ENCODE measurements at regions of chr6 and their contacts with region 1.

Region 1: DNA sequence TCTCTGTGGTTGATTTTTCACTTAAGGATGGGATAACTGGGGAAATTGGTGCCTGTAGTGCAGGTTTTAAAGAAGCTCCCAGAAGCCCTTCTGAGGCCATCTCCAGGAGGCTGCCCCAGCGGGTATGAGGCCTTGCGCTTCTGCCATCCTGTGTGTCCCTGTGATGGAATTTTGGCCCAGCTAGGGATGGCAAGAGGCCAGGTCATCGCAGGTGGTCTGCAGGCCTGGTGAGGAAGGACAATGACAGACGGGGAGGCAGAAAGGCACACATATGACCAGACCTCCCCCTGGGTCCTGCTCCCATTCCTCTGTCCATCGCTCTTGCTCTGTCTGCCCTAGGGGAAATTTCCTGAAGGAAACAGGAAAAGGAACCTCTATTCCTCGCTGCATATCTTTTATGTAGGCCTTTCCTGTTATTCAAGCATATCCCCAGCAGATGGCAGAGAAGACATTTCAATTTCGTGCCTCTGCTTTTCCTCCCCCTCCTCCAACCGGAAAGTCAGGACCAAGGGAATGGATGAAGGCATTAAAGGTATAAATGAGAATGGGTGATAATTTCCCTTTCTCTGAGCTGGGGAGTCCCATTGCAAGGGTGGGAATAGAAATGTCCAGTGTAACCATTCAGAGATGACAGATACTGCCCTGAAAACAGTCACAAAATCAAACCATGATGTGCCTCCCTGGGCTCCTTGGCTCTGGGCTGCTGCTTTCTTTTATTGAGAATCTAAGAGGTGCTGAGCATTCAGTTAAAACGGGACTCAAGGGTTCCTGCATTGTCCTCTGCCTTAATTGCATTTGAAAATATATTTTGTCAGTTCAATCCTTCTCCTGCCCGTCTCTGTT is 17.6 kb upstream of the HLA-F start:
- DNase-seq: peak; percentile 63
- H3K4me3 ChIP-seq: no peak overlapping the region
- H3K27ac ChIP-seq: no peak overlapping the region
- H3K4me1 ChIP-seq: no peaks in the 10 kb centered on the region
- H3K27me3 ChIP-seq: peaks cover 24% of the 10 kb centered on the region
- CTCF ChIP-seq: peak; percentile 61

Region 2: GRCh38 chr6:29752451-29753308 is 47.1 kb after region 1 on chr6:
- CTCF ChIA-PET with region 1: no interaction called
- POLR2A ChIA-PET with region 1: no interaction called
- intact Hi-C with region 1: loop called (anchors 5 kb)
- DNase-seq: peak; percentile 93
- H3K4me3 ChIP-seq: peak overlapping the region; percentile 61
- H3K27ac ChIP-seq: no peak overlapping the region
- H3K4me1 ChIP-seq: peaks cover 14% of the 10 kb centered on the region
- H3K27me3 ChIP-seq: peaks cover 8% of the 10 kb centered on the region
- CTCF ChIP-seq: peak; percentile 99

Region 3: DNA sequence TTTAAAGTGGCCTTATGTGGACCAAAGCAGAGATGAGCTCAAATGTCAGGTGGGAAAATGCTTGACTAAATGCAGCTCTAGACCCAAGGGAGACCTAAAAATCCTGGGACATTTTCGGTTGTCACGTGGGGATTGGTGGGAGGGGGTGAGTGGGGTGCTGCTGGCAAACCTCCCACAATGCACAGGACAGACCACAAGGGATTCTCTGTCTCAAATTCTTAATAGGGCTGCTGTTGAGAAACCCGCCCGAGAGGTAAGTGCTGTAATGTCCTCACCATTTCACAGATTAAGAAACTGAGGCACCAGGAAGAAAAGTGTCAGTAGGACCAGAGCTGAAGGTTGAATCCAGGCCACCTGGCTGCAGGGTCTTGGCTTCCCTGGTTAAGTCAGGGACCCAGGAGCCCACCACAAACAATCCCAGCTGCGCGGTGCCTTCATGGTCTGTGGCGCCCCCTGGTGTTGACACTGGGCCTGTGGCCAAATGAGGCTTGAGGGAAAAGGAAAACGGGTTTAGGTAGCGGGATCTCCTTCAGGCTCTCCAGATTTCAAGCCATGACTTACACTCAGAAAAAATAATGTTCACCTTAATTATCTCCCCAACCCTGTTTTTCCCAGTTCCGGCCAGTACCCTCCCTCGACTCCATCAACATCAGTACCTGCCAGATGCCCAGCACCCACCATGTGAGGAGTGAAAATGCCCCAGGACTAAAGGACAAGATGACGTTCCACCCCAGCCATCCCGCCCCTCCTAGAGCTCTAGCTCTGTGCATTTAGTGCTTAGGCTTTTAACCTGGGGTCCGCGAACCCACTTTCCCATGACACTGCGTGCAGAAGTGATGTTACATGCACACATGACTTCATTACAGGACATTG is 129.2 kb after region 1 on chr6:
- CTCF ChIA-PET with region 1: interaction called, 3 read pairs
- POLR2A ChIA-PET with region 1: no interaction called
- intact Hi-C with region 1: loop called (anchors 2 kb)
- DNase-seq: peak; percentile 33
- H3K4me3 ChIP-seq: no peak overlapping the region
- H3K27ac ChIP-seq: no peak overlapping the region
- H3K4me1 ChIP-seq: no peaks in the 10 kb centered on the region
- H3K27me3 ChIP-seq: peaks cover 35% of the 10 kb centered on the region
- CTCF ChIP-seq: peak; percentile 89

Region 4: DNA sequence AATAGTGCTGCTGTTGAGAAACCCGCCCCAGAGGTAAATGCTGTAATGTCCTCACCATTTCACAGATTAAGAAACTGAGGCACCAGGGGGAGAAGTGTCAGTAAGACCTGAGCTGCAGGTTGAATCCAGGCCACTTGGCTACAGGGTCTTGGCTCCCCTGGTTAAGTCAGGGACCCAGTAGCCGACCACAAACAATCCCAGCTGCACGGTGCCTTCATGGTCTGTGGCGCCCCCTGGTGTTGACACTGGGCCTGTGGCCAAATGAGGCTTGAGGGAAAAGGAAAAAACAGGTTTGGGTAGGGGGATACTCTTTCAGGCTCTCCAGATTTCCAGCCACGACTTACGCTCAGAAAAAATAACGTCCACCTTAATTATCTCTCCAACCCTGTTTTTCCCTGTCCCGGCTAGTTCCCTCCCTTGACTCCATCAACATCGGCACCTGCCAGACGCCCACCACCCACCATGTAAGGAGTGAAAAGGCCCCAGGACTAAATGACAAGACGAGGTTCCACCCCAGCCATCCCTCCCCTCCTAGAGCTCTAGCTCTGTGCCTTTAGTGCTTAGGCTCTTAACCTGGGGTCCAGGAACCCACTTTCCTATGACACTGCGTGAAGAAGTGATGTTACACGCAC is 307.8 kb after region 1 on chr6:
- CTCF ChIA-PET with region 1: no interaction called
- POLR2A ChIA-PET with region 1: no interaction called
- intact Hi-C with region 1: loop called (anchors 5 kb)
- DNase-seq: peak; percentile 24
- H3K4me3 ChIP-seq: no peak overlapping the region
- H3K27ac ChIP-seq: no peak overlapping the region
- H3K4me1 ChIP-seq: no peaks in the 10 kb centered on the region
- H3K27me3 ChIP-seq: peaks cover 4% of the 10 kb centered on the region
- CTCF ChIP-seq: peak; percentile 80

Measured in A673 (cell line).